Left cardiac atrium (tissue), 4 donors: ENCODE measurements at regions of chr1 and their contacts with region 1.

Region 1: DNA sequence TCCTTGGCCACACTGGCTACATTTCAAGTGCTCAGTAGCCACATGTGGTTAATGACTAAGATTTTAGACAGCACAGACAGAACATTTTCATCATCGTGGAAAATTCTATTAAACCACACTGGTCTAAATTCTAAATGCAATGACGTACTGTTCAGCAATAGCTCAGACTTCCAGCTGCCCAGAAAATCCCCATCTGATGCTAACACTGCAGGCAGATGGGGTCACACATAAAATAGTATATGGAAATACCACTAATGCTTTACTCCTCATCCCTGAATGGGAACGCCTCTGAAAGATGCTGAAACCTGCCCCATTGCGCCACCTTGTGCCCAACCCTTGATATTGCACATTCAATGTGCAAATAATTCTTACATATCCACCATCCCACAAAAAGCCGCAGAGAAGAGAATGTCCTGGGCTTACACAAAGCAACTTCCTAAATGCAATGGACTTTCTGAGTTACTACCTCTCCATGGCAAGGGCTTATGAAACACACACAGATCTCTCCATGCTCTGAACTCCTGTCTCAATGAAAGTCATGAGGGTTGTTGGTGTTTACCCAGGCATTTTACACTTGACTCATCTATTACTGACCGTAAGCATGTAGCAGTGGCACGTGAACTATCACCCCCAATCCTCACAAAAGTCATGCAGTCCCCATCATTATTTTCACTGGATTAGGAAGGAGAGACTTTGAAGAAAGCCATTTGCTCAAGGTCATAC is 20.3 kb upstream of the SLC5A9 start:
- DNase-seq: peak; percentile 68
- ATAC-seq: peak; percentile 71 to 89

Region 2: GRCh38 chr1:47738560-47739182 is 463.5 kb before region 1 on chr1:
- intact Hi-C with region 1: loop called (anchors 5 to 10 kb)
- DNase-seq: peak; percentile 53
- ATAC-seq: peak; percentile 87 to 90

Region 3: DNA sequence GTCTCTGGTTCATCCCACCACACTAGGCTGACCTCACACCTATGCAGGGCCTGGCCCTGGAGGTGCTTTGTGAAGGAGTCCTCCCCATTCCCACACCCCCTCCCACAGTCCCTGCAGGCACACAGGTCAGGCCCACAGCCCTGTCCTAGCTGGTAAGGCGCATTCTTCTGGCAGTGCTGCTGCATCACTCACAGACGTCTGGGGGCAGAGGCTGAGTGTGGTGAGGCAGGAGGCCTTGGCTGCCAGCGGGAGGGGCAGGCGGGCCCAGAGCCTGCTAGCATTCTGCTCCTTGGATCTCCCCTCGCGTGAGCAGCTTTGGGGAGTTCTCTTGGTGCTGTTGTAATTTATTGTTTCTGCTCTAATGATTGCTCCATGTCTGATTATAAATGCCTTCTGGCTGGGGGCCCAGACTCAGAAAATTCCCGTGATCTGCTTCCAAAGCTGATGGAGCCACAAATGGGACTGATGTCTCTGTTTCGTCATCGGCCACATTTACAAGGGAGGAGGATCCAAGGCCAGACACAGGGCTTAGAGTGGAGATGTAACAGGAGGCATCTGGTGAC is 267.9 kb before region 1 on chr1:
- intact Hi-C with region 1: no loop called
- DNase-seq: peak; percentile 76
- ATAC-seq: peak; percentile 85 to 87

Region 4: GRCh38 chr1:48109390-48110013 is 92.7 kb before region 1 on chr1:
- intact Hi-C with region 1: loop called (anchors 1 to 5 kb)
- DNase-seq: no peak
- ATAC-seq: peak; percentile 47 to 59